Posterior vena cava (tissue), 2 donors: ENCODE measurements at regions of chr7 and their contacts with region 1.

Region 1: GRCh38 chr7:43582503-43583423 is at the start of gene STK17A:
- DNase-seq: peak; percentile 97
- total RNA-seq, gene STK17A: 21.1 to 32.2 TPM

Region 2: DNA sequence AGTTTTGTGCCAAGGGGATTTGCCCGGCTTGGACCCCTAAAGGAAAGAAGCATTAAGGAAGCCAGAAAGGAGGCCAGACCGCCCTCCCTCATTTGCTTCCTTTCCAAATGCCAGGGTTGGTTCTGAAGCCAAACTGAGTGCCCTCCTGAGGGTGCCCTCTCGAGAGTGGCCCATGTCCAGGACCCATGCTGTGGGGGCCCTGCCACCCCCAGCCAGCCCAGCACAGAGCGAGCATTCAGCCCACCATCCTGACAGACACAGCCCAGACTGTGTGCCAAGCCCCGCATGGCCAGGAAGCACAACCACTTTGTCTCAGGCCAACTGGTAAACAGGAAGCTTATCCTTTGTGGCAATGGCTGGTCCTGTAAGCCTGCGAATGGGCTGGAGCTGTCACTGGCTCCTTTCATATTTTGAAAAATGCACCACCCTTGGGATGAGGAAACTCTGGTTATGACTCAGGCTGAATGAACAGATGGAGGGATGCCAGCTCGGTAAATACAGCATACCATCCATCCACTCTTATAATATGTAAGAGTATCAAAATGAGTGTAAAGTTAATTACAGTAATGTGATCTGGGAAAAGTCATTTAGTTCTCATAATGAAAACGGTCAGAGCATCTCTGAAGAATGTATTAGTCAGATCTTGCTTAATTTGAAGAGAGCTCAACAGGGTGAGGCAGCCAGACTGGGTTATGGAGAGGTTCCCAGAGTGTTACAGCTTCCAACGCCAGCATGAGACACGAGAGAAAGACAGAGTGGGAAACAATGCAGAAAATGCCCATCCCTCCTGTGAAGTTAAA is 65.1 kb after region 1 on chr7:
- intact Hi-C with region 1: loop called in 1 of 2 experiments (anchors 10 kb)
- DNase-seq: peak; percentile 86

Region 3: GRCh38 chr7:43700059-43700501 is 117.3 kb after region 1 on chr7:
- intact Hi-C with region 1: loop called (anchors 2 to 5 kb)
- DNase-seq: no peak

Region 4: GRCh38 chr7:43834463-43835251 is 251.9 kb after region 1 on chr7:
- intact Hi-C with region 1: loop called (anchors 5 kb)
- DNase-seq: no peak